Activated T-helper 2 cell treated with anti-CD3 and anti-CD28 coated beads, Interferon-gamma antibody, Interleukin-2, Interleukin-4, amounts not matched to agents 10 μg/mL and 5 μg/mL and 100 μg/mL, durations not matched to agents 14 hours and 24 hours and 36 hours (primary cell): ENCODE measurements at regions of chr2 and their contacts with region 1.

Region 1: DNA sequence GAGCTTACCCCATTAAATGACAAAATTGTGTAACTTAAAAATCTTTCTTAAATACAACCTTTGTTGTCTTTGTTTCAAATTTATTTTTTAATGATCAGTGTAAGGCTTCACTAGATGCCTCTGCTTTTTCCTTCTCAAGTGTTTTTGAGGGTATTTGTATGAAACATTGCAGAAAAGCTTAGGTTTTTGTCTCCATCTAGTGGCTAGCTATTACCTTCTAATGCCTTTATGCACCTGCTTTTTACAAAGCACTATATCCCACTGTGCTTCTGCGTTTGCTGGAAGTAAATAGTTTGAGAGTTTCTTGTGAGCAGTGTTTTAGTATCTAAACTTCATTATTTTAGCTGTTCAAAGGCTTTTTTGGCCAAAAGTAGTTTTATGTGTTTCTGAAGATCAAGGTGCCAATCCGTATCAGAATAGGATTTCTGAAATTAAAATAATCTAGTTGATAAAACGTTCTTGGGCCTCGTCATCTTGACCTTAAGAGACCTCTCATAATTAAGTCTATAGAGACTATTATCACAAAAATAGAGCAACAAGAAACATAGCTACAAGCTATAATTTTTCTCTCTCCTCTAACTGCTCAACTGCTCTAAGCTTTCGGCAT is 47.0 kb downstream of the IWS1 start:
- DNase-seq: no peak
- H3K4me3 Mint-ChIP-seq: no peak overlapping the region
- H3K27ac Mint-ChIP-seq: no peak overlapping the region
- H3K4me1 Mint-ChIP-seq: no peaks in the 10 kb centered on the region
- H3K27me3 Mint-ChIP-seq: no peaks in the 10 kb centered on the region

Region 2: GRCh38 chr2:127197475-127198385 is 281.6 kb before region 1 on chr2:
- intact Hi-C with region 1: loop called (anchors 5 kb)
- DNase-seq: peak; percentile 28
- H3K4me3 Mint-ChIP-seq: peak overlapping the region; percentile 58
- H3K27ac Mint-ChIP-seq: no peak overlapping the region
- H3K4me1 Mint-ChIP-seq: peaks cover 2% of the 10 kb centered on the region
- H3K27me3 Mint-ChIP-seq: no peaks in the 10 kb centered on the region

Region 3: GRCh38 chr2:127324635-127325034 is 154.7 kb before region 1 on chr2:
- intact Hi-C with region 1: loop called (anchors 2 kb)
- DNase-seq: no peak
- H3K4me3 Mint-ChIP-seq: no peak overlapping the region
- H3K27ac Mint-ChIP-seq: no peak overlapping the region
- H3K4me1 Mint-ChIP-seq: peaks cover 6% of the 10 kb centered on the region
- H3K27me3 Mint-ChIP-seq: no peaks in the 10 kb centered on the region

Region 4: DNA sequence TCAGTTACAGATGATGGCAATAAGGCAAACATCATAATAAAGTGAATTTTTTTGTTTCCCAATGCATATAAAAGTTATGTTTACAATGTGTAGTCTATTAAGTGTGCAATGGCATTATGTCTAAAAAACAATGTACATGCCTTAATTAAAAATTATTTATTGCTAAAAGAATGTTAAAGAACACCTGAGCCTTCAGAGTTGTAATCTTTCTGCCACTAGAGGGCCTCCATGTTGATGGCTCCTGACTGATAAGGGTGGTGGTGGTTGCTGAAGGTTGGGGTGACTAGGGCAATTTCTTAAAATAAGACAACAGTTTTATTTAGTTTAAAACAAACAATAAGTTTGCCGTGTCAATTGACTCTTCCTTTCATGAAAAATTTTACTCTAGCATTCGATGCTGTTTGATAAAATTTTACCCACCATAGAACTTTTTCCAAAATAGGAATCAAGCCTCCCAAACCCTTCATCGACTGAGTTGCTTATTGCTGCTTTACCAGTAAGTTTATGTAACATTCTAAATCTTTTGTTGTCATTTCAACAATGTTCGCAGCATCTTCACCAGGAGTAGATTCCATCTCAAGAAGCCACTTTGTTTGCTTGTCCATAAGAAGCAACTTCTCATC is 123.8 kb before region 1 on chr2:
- intact Hi-C with region 1: loop called (anchors 2 kb)
- DNase-seq: no peak
- H3K4me3 Mint-ChIP-seq: no peak overlapping the region
- H3K27ac Mint-ChIP-seq: no peak overlapping the region
- H3K4me1 Mint-ChIP-seq: peaks cover 33% of the 10 kb centered on the region
- H3K27me3 Mint-ChIP-seq: no peaks in the 10 kb centered on the region